ENCODE measurements at regions of chr5 and their contacts with region 1.

Region 1: DNA sequence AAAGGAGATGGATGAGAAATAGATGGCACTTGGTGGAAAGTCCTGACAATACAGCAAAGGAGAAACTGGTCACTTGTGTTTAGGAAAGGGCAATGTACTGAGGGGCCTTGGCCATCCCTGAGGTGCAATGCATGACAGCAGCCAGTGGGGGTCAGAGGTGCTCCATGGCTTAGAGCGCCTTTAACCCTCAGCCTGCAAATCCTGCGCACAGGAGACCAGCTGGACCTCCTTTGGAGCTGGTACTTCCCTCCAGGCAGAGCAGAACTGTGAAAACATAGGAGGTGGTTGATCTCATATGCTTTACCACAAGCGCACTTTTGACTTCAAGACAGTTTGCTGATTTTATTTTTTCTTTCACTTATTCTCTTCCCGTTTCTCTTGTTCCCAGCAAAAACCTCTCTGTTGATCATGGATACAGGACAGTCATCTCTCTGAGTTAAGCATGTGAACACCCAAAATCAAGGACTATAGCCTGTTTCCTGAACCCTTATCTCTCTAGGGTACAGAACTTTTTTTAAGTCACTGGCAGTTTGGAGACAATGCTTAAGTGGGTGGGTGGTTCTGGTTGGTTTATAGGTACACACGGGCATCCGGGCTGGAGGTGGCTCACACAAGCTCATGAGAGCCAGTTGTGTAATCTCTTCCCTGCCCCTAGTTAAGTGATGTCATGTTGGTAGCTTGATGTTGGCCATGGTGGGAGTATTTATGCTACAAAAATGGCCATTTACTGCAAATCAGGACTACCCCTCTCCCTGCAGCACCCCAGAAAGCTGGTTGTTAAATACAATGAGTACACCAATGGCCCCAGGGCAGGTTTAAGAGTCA is 37.6 kb upstream of the ANKRD55 start:
- DNase-seq: peak; percentile 62
- ATAC-seq: peak; percentile 97
- H3K4me3 ChIP-seq: no peak overlapping the region
- H3K27ac ChIP-seq: no peak overlapping the region
- H3K4me1 ChIP-seq: no peaks in the 10 kb centered on the region
- H3K27me3 ChIP-seq: no peaks in the 10 kb centered on the region
- CTCF ChIP-seq: peak; percentile 89 to 99 (median 99)
- EP300 ChIP-seq: no peak
- POLR2A ChIP-seq: no peak
- RAD21 ChIP-seq: peak; percentile 99

Region 2: GRCh38 chr5:55936100-55936693 is 334.6 kb before region 1 on chr5:
- CTCF ChIA-PET with region 1: interaction called, 23 read pairs
- POLR2A ChIA-PET with region 1: no interaction called
- RAD21 ChIA-PET with region 1: interaction called, 21 read pairs
- SMC1A ChIA-PET with region 1: interaction called, 14 read pairs
- in situ Hi-C with region 1: no loop called
- intact Hi-C with region 1: loop called (anchors 2 kb)
- DNase-seq: no peak
- ATAC-seq: peak; percentile 81
- H3K4me3 ChIP-seq: no peak overlapping the region
- H3K27ac ChIP-seq: no peak overlapping the region
- H3K4me1 ChIP-seq: no peaks in the 10 kb centered on the region
- H3K27me3 ChIP-seq: no peaks in the 10 kb centered on the region
- CTCF ChIP-seq: peak; percentile 83 to 94 (median 87)
- EP300 ChIP-seq: no peak
- POLR2A ChIP-seq: no peak
- RAD21 ChIP-seq: peak; percentile 92

Region 3: DNA sequence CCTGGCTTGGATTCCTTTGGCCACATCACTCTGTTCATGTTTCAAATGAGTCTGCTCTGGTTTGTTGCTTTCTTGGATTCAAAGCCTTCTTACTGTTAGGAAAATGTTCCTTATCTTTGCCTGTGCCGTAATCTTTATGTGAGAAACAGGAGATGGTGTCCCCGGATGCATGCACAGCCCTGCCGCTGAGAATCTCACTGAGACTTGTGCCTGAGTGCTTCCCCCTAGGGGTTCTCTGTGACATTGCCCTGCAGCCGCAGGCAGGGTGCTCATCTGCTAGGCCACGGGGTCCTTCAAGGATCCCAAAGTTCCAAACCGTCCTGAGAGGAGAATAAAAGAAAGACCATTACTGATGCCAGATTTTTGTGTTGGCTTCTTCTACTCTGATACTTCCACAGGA is 43.7 kb after region 1 on chr5:
- CTCF ChIA-PET with region 1: interaction called, 19 read pairs
- POLR2A ChIA-PET with region 1: no interaction called
- RAD21 ChIA-PET with region 1: interaction called, 6 read pairs
- SMC1A ChIA-PET with region 1: interaction called, 8 read pairs
- in situ Hi-C with region 1: no loop called
- intact Hi-C with region 1: loop called (anchors 2 kb)
- DNase-seq: no peak
- ATAC-seq: peak; percentile 85
- H3K4me3 ChIP-seq: no peak overlapping the region
- H3K27ac ChIP-seq: no peak overlapping the region
- H3K4me1 ChIP-seq: peaks cover 15% of the 10 kb centered on the region
- H3K27me3 ChIP-seq: no peaks in the 10 kb centered on the region
- CTCF ChIP-seq: peak; percentile 62 to 96 (median 91)
- EP300 ChIP-seq: no peak
- POLR2A ChIP-seq: no peak
- RAD21 ChIP-seq: peak; percentile 64

Region 4: GRCh38 chr5:56429082-56429891 is 158.5 kb after region 1 on chr5:
- CTCF ChIA-PET with region 1: no interaction called
- POLR2A ChIA-PET with region 1: no interaction called
- RAD21 ChIA-PET with region 1: no interaction called
- SMC1A ChIA-PET with region 1: no interaction called
- in situ Hi-C with region 1: no loop called
- intact Hi-C with region 1: no loop called
- DNase-seq: no peak
- ATAC-seq: no peak
- H3K4me3 ChIP-seq: no peak overlapping the region
- H3K27ac ChIP-seq: no peak overlapping the region
- H3K4me1 ChIP-seq: no peaks in the 10 kb centered on the region
- H3K27me3 ChIP-seq: no peaks in the 10 kb centered on the region
- CTCF ChIP-seq: no peak
- EP300 ChIP-seq: no peak
- POLR2A ChIP-seq: no peak
- RAD21 ChIP-seq: no peak

Region 5: DNA sequence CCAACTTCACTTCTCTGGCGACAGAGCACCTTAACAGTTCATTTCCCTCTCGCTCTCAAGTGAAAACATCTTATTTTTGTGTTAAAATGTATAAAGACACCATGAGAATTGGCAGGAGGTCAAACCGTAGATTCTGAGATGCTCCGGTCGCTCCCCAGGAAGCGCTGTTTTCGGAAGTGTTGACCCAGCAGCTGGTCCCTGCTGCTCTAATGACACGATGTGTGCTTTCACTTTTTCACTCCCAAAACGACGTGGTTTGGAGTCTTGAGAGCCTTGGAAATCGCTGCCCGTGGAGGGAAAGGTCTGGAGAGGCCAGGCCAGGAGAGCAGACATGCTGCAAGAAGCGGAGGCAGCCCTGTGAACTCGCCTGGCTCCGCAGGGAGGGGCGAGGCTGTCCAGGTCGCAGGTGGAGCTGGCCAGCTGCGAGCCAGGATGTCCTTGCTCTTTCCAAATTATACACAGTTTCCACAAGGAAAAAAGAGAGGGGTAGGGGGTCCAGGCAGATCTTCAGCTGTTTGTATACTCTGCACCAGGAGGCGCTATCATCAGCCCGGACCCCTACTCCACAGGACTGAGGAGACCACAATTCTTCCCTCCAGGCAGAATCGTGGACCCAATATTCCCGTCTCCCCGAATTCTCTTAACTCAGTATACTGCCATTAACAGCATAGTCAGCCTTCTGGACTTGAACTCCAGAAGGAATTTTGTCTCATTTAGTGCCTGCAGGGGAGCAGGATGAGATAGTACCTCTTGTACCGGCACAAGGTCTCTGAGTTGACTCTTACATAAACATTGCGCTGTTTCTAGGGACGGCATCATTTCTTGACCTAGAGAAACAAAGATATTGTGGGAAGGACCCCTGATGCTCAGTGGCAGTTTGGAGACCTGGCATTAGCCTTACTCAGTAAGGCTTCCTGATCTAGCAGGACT is 210.9 kb after region 1 on chr5:
- CTCF ChIA-PET with region 1: interaction called, 15 read pairs
- POLR2A ChIA-PET with region 1: no interaction called
- RAD21 ChIA-PET with region 1: interaction called, 10 read pairs
- SMC1A ChIA-PET with region 1: interaction called, 17 read pairs
- in situ Hi-C with region 1: no loop called
- intact Hi-C with region 1: loop called (anchors 2 kb)
- DNase-seq: peak; percentile 23
- ATAC-seq: peak; percentile 58
- H3K4me3 ChIP-seq: peak overlapping the region; percentile 87
- H3K27ac ChIP-seq: peak overlapping the region; percentile 4; the same call in 1 of the 2 replicates
- H3K4me1 ChIP-seq: peaks cover 24% of the 10 kb centered on the region
- H3K27me3 ChIP-seq: no peaks in the 10 kb centered on the region
- CTCF ChIP-seq: peak; percentile 15 to 31 (median 26); a peak in 2 of 6 replicates
- EP300 ChIP-seq: no peak
- POLR2A ChIP-seq: no peak
- RAD21 ChIP-seq: peak; percentile 32; the same call in 1 of the 2 replicates

Region 6: GRCh38 chr5:56814963-56815658 is 544.3 kb after region 1 on chr5 and contains the start of gene MAP3K1:
- CTCF ChIA-PET with region 1: interaction called, 7 read pairs
- POLR2A ChIA-PET with region 1: no interaction called
- RAD21 ChIA-PET with region 1: interaction called, 15 read pairs
- SMC1A ChIA-PET with region 1: interaction called, 4 read pairs
- in situ Hi-C with region 1: no loop called
- intact Hi-C with region 1: loop called (anchors 5 kb)
- DNase-seq: no peak
- ATAC-seq: peak; percentile 63
- H3K4me3 ChIP-seq: peak within 1 kb of the TSS; percentile 97
- H3K27ac ChIP-seq: peak within 1 kb of the TSS; percentile 78
- H3K4me1 ChIP-seq: peaks cover 23% of the 10 kb centered on the region
- H3K27me3 ChIP-seq: no peaks in the 10 kb centered on the region
- CTCF ChIP-seq: peak in 1 of 3 experiments; percentile 22; a peak in 2 of 6 replicates
- EP300 ChIP-seq: no peak
- POLR2A ChIP-seq: peak; percentile 63
- RAD21 ChIP-seq: no peak
- polyA plus RNA-seq, gene MAP3K1: 7.5 to 12.1 TPM

Region 7: DNA sequence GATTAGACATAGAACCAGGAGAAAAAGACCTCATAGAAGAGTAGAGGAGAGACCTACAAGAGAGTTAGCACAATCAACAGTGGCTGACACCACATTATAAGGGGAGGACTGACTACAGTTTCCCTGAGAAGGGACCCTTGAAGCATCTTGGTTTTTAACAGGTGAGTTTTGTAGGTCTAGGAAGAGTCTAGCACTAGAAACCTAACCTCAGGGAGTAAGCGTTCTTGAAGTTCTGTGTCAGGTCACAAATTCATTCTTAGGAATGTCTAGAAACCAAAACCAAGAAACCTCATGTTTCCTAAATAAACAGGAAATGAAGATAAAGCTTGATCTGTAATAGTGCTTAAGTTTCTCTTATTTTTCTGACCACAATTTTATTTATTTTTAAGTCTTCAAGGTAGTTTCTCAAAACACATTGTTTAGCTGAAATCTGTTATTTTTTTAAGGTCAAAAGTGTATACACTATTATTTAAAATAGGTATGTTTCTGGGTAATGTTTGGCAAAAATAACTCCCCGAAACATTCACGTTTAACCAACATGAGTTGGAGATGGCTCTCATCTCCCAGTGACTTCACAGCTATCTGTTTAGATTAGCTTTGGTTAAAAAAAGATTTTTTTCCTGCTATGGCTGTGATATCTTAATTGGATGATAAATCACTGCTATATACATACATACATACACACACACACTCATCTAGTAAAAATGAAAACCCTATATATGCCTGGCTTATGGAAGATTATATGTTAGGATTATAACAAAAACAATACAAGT is 581.6 kb after region 1 on chr5:
- CTCF ChIA-PET with region 1: interaction called, 12 read pairs
- POLR2A ChIA-PET with region 1: no interaction called
- RAD21 ChIA-PET with region 1: interaction called, 5 read pairs
- SMC1A ChIA-PET with region 1: interaction called, 10 read pairs
- in situ Hi-C with region 1: no loop called
- intact Hi-C with region 1: no loop called
- DNase-seq: no peak
- ATAC-seq: peak; percentile 41
- H3K4me3 ChIP-seq: no peak overlapping the region
- H3K27ac ChIP-seq: no peak overlapping the region
- H3K4me1 ChIP-seq: no peaks in the 10 kb centered on the region
- H3K27me3 ChIP-seq: no peaks in the 10 kb centered on the region
- CTCF ChIP-seq: no peak
- EP300 ChIP-seq: no peak
- POLR2A ChIP-seq: no peak
- RAD21 ChIP-seq: no peak

Region 8: GRCh38 chr5:57137401-57137800 is 866.6 kb after region 1 on chr5:
- CTCF ChIA-PET with region 1: interaction called, 9 read pairs
- POLR2A ChIA-PET with region 1: no interaction called
- RAD21 ChIA-PET with region 1: interaction called, 6 read pairs
- SMC1A ChIA-PET with region 1: interaction called, 18 read pairs
- in situ Hi-C with region 1: loop called (anchors 5 kb)
- intact Hi-C with region 1: loop called (anchors 2 kb)
- DNase-seq: no peak
- ATAC-seq: no peak
- H3K4me3 ChIP-seq: no peak overlapping the region
- H3K27ac ChIP-seq: no peak overlapping the region
- H3K4me1 ChIP-seq: no peaks in the 10 kb centered on the region
- H3K27me3 ChIP-seq: no peaks in the 10 kb centered on the region; a peak in 1 of 4 replicates
- CTCF ChIP-seq: no peak
- EP300 ChIP-seq: no peak
- POLR2A ChIP-seq: no peak
- RAD21 ChIP-seq: no peak

Measured in GM12878 (cell line).